ENCODE measurements at regions of chr3 and their contacts with region 1.

Region 1: DNA sequence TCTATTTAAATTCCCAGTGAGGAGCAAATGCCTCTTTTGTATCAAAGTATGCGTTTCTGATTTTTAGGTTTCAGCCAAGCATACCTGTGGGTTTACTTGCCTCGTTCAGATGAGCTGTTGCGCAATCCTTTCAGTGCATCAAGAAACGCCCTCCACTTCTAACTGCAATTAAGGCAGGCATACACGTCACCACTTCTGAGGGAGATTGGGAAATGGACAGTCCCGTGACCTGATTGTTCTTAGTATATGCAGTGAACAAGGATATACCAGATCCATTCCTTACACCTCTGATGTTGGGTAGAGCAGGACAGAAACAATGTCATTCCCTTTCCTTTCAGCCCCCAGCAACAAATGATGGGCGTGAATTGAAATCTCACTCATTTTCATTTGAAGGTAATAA is 219.0 kb downstream of the ITPR1 start:
- DNase-seq: peak; percentile 69 to 91
- H3K4me3 ChIP-seq: 0 out of 2 replicates have a peak overlapping the region, but pooled peaks have one; percentile 23
- H3K27ac ChIP-seq: peak overlapping the region; percentile 87
- H3K4me1 ChIP-seq: peaks cover 13% of the 10 kb centered on the region
- H3K27me3 ChIP-seq: no peaks in the 10 kb centered on the region
- CTCF ChIP-seq: no peak

Region 2: DNA sequence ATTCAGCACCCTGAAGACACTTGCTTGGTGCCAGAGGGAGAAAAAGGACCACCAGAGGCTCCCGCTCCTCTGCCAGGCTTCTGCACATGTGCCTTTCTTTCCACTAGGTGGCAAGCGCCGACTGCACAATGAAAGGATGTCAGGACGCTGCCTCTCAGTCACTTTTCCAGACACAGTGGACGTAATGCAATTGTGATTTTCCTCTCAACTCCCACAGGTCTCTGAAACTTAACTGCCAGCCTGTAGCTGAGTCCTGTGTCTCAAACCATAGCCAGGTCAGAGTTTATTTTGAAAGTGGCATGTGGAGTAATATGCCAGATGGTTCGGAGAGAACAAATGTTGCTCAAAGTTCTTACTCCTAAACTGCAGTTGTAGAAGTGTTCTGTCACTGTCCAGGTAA is 56.1 kb before region 1 on chr3:
- CTCF ChIA-PET with region 1: no interaction called
- POLR2A ChIA-PET with region 1: no interaction called
- intact Hi-C with region 1: loop called (anchors 1 kb)
- DNase-seq: peak; percentile 36 to 69
- H3K4me3 ChIP-seq: no peak overlapping the region
- H3K27ac ChIP-seq: no peak overlapping the region
- H3K4me1 ChIP-seq: no peaks in the 10 kb centered on the region
- H3K27me3 ChIP-seq: no peaks in the 10 kb centered on the region
- CTCF ChIP-seq: peak; percentile 79

Region 3: DNA sequence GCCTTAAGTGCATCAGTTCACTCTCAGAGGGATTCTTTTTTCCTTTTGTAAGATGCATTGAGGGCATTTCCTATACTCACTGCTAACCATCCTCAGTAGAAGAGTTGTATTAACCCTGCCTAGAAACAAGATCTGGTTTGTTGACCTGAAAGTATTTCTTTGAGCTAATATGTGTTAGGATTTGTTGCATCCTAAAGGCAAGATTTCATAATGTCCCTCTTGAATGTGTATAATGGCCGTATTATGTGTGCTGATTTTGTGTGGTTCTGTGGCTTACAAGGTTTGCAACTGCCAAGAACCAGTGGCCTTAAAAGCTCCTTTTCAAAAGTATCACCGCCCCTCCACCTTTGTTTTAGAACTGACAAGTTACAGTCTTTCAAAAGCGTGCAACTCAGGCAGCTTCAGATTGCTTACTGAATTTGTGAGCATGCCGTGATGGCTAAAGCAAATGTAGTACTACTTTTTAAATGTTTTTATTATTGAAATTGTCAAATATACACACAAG is 85.1 kb after region 1 on chr3:
- CTCF ChIA-PET with region 1: no interaction called
- POLR2A ChIA-PET with region 1: no interaction called
- intact Hi-C with region 1: no loop called
- DNase-seq: no peak
- H3K4me3 ChIP-seq: no peak overlapping the region
- H3K27ac ChIP-seq: no peak overlapping the region
- H3K4me1 ChIP-seq: no peaks in the 10 kb centered on the region
- H3K27me3 ChIP-seq: no peaks in the 10 kb centered on the region
- CTCF ChIP-seq: no peak

Region 4: DNA sequence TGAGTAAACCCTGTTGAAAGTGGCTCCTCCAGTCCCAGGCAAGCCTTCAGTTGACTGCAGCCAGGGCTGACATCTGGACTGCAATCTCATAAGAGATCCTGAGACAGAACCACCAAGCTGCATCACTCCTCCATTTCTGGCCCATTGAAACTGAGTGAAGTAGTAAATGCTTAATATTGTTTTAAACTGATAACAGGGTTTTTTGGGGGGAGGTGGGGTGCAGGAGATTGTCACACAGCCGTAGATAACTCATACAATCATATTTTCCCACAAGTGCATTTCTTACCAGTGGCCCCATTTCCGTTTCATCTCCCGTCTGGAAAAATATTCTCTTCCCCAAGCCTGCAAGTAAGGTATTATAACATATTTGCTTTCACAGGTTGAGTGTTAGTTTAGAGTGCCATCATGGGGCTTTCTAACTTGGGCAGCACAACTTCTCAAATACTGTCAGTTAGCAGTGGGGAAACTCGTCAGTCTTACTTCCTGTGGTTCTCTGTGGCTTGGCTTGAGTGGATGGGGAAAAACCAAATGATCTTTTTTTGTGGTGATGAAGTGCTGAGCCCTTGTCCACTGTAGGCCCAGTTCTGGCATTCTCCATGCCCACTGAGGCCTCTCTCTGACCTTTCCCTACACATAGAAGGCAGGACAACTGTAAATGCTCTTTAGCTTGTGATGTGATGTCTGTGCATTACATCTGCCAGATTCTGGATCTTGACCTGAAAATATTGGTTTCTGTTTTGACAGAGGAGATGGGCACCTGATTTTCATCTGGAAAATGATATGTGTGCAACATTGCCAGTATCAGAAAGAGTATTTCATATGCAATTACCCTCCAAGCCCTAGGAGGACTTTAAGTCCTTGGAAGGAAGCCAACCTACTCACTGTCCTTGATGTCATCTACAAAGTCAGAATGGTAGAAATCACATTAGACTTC is 177.0 kb after region 1 on chr3:
- CTCF ChIA-PET with region 1: no interaction called
- POLR2A ChIA-PET with region 1: no interaction called
- intact Hi-C with region 1: no loop called
- DNase-seq: no peak
- H3K4me3 ChIP-seq: no peak overlapping the region
- H3K27ac ChIP-seq: no peak overlapping the region
- H3K4me1 ChIP-seq: no peaks in the 10 kb centered on the region
- H3K27me3 ChIP-seq: no peaks in the 10 kb centered on the region
- CTCF ChIP-seq: no peak

Region 5: GRCh38 chr3:5026331-5027218 is 314.4 kb after region 1 on chr3:
- CTCF ChIA-PET with region 1: interaction called, 5 read pairs
- POLR2A ChIA-PET with region 1: no interaction called
- intact Hi-C with region 1: loop called (anchors 1 kb)
- DNase-seq: peak; percentile 64 to 87
- H3K4me3 ChIP-seq: peak overlapping the region; percentile 48; the same call in 1 of the 2 replicates
- H3K27ac ChIP-seq: peak overlapping the region; percentile 73
- H3K4me1 ChIP-seq: peaks cover 33% of the 10 kb centered on the region
- H3K27me3 ChIP-seq: no peaks in the 10 kb centered on the region
- CTCF ChIP-seq: peak; percentile 61

Region 6: DNA sequence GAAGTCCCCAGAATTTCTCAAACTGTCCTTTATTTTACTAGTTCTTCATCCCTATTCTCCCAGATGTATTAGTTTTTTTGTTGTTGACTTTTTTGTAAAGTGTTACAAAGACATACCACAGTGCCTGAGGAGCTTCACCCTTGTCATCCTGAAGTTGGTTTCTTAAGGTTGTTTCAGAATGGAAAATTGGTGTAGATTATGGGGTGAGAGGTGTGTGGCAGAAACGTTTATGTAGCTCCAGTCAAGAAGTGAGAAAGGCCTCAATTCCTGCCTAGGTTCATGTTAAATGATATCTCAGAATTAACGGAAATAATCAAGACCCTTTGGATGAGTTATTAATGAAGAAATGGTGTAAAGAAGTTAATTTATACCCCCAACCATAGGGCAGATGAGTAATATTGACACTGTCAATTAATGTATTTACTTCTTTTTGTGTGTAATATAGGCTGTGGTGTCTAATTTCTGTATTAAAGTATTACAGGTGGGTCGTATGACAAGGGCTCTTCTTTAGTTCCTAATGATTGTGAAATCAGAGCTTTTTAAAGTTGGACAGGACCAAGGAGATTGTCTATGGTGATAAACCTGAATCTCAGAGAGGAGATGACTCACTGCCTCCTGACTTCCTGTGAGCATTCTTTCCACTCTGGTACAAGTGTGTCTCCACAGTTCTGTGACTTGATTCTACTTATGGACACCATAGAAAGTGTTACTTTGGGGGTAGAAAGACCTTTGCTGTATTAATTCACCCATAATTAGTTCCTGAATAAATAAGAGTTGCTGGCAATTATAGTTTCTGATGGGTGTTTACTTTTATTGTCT is 482.4 kb after region 1 on chr3:
- CTCF ChIA-PET with region 1: interaction called, 14 read pairs
- POLR2A ChIA-PET with region 1: no interaction called
- intact Hi-C with region 1: loop called (anchors 5 kb)
- DNase-seq: peak; percentile 31 to 91
- H3K4me3 ChIP-seq: peak overlapping the region; percentile 19; the same call in 1 of the 2 replicates
- H3K27ac ChIP-seq: peak overlapping the region; percentile 100
- H3K4me1 ChIP-seq: peaks cover 88% of the 10 kb centered on the region
- H3K27me3 ChIP-seq: no peaks in the 10 kb centered on the region
- CTCF ChIP-seq: no peak

Region 7: GRCh38 chr3:5376761-5377160 is 664.6 kb after region 1 on chr3:
- CTCF ChIA-PET with region 1: no interaction called
- POLR2A ChIA-PET with region 1: no interaction called
- intact Hi-C with region 1: no loop called
- DNase-seq: peak; percentile 70 to 84
- H3K4me3 ChIP-seq: no peak overlapping the region
- H3K27ac ChIP-seq: no peak overlapping the region
- H3K4me1 ChIP-seq: 0 out of 2 replicates have a peak, but pooled peaks cover 3% of the 10 kb centered on the region
- H3K27me3 ChIP-seq: no peaks in the 10 kb centered on the region
- CTCF ChIP-seq: no peak

Measured in PC-9 (cell line).